ENCODE measurements at regions of chr6 and their contacts with region 1.

Region 1: DNA sequence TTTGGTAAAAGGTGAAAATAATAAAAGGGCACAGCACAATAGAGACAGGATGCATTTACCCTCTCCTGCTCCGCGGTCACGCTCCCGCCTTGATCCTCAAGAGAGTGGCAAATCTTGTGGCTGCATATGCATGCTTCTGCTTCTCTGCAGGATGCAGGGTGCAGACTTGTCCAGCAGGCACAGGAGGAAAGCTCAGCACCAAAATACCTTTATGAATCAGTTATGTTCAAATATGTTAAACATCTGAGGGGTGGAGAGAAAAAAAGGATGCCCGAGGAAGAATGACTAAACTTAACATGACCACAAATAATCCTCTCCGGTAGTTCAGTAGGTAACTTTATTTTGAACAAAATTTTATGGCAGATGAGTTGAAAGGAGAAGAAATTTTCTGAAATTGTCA is 366.1 kb upstream of the SOX4 start:
- DNase-seq: peak; percentile 85
- H3K4me3 ChIP-seq: no peak overlapping the region
- H3K27ac ChIP-seq: peak overlapping the region; percentile 80
- H3K4me1 ChIP-seq: peaks cover 39% of the 10 kb centered on the region
- H3K27me3 ChIP-seq: no peaks in the 10 kb centered on the region
- CTCF ChIP-seq: peak in 1 of 2 donors; percentile 52

Region 2: GRCh38 chr6:21188505-21189223 is 38.8 kb before region 1 on chr6:
- CTCF ChIA-PET with region 1: no interaction called
- dilution Hi-C with region 1: no loop called
- in situ Hi-C with region 1: no loop called
- intact Hi-C with region 1: loop called (anchors 2 kb)
- DNase-seq: peak; percentile 90
- H3K4me3 ChIP-seq: no peak overlapping the region
- H3K27ac ChIP-seq: peak overlapping the region; percentile 79
- H3K4me1 ChIP-seq: peaks cover 16% of the 10 kb centered on the region
- H3K27me3 ChIP-seq: no peaks in the 10 kb centered on the region
- CTCF ChIP-seq: no peak

Region 3: DNA sequence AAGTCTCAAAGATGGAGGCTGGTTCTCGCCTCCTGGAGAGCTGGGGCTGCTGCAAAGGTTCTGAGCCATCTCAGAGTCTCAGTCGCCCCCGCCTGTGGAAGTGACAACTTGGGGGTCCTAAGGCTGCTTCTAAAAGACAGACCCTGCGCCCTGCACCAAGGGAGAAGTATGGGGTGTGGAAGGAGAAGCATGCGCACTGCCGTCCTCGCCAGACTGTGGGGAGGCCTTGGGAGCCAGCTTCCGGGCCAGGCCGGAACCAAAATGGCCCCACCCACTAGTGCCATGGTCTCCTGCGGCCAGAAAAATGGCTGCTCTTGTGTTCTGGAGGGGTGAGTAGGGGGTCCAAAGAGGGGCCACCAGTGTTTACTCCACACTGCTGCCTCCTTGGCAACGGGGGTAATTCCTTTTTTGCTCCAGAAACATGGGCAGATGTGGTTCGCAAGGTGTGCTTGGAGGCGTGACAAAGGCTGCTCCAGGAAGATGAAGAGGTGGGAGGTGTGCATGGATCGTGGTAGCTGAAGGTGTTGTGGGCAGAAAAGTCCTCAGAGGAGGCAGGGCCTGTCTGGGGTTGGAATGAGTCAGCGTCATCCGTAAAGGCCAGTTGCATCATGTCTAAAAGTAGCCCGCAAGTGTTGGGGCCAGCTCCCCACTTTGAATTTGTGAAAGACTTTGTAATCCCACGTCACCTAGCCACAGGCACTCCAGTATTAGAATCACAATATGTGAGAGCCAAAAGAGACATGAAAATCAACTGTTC is 36.2 kb after region 1 on chr6:
- CTCF ChIA-PET with region 1: no interaction called
- dilution Hi-C with region 1: no loop called
- in situ Hi-C with region 1: no loop called
- intact Hi-C with region 1: loop called (anchors 1 kb)
- DNase-seq: peak; percentile 98
- H3K4me3 ChIP-seq: no peak overlapping the region
- H3K27ac ChIP-seq: peak overlapping the region; percentile 86
- H3K4me1 ChIP-seq: peaks cover 27% of the 10 kb centered on the region
- H3K27me3 ChIP-seq: no peaks in the 10 kb centered on the region
- CTCF ChIP-seq: no peak

Region 4: GRCh38 chr6:21402368-21402767 is 174.9 kb after region 1 on chr6:
- CTCF ChIA-PET with region 1: no interaction called
- dilution Hi-C with region 1: no loop called
- in situ Hi-C with region 1: no loop called
- intact Hi-C with region 1: loop called (anchors 10 kb)
- DNase-seq: peak; percentile 23
- H3K4me3 ChIP-seq: no peak overlapping the region
- H3K27ac ChIP-seq: no peak overlapping the region
- H3K4me1 ChIP-seq: peaks cover 5% of the 10 kb centered on the region
- H3K27me3 ChIP-seq: no peaks in the 10 kb centered on the region
- CTCF ChIP-seq: no peak

Region 5: DNA sequence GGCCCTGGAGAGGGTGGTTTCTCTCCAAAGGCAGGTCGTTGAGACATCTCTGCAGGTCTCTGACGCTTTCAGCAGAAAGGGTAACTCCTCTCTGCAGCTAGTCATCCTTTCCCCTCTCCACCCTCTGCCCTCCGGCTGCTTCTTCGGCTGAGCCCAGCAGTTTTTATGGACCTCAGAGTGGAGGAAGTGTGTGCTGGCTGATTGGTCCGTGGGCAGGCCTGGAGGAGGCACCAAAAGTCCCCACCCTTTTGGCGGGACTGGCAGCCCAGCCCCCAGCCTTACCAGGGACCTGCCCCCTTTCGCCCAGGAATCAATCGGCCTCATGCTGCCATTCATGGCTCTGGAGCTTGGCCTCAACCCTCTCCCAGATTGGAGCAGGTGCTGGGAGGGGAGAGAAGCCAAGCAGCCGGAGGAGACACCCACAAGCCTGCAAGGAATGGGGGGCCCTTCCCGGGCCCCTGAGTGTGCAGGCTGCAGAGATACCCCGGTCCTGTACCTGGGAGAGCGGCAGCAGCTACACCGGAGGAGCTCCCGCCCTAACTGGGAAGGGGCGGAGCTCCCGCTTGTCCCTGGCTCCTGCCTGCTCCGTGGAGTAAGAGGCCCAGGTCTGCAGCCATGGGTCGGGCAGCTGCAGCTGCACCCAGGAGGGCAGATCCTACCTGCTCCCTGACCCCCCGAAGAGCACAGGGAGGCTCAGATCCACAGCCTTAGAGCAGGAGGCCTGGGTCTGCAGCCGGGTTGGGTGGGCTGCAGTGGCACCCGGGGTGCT is 195.8 kb after region 1 on chr6:
- CTCF ChIA-PET with region 1: no interaction called
- dilution Hi-C with region 1: no loop called
- in situ Hi-C with region 1: no loop called
- intact Hi-C with region 1: no loop called
- DNase-seq: no peak
- H3K4me3 ChIP-seq: no peak overlapping the region
- H3K27ac ChIP-seq: no peak overlapping the region
- H3K4me1 ChIP-seq: no peaks in the 10 kb centered on the region
- H3K27me3 ChIP-seq: no peaks in the 10 kb centered on the region
- CTCF ChIP-seq: no peak